Mammary epithelial cell (primary cell): ENCODE measurements at regions of chr10 and their contacts with region 1.

Region 1: GRCh38 chr10:102394079-102394800 is 1.3 kb upstream of the NFKB2 start:
- DNase-seq: peak; percentile 98
- H3K4me3 ChIP-seq: peak overlapping the region; percentile 74 to 77 (median 76)
- H3K27ac ChIP-seq: peak overlapping the region; percentile 89
- H3K4me1 ChIP-seq: peaks cover 18% of the 10 kb centered on the region
- H3K27me3 ChIP-seq: no peaks in the 10 kb centered on the region
- CTCF ChIP-seq: no peak

Region 2: DNA sequence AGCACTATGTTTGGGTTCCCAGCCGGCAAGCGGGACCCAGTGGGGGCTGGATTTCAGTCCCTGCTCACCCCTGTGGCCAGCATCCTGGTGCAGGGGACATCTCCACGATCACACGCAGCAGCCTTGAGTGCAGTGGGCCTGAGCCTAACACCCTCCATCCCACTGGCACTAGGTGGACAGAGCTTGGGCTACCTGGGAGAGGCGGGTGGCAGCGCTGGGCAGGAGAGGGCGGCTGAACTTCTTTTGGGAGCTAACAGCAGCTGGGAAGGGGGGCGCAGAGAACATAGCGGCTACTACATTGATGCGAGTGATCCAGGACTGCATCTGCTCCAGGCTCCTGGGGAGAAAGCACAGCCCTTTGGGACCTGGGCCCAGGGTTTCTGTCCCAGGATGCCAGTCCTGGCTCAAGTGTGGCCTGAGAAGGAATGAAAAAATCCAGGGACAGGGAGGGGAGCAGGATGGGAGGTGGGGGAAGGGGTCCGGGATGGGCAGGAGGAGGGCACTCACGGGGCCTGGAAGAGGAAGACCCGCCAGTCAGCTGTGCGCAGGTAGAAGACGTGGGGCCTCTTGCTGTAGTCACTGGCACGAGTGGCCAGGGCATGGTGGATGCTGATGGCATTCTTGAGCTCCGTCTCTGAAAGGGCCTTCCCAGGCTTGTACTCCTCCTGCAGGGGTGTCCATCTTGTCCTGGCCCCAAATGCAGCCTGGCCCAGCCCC is 10.3 kb after region 1 on chr10:
- CTCF ChIA-PET with region 1: interaction called, 8 read pairs
- dilution Hi-C with region 1: no loop called
- in situ Hi-C with region 1: no loop called
- intact Hi-C with region 1: loop called (anchors 1 kb)
- DNase-seq: no peak
- H3K4me3 ChIP-seq: no peak overlapping the region
- H3K27ac ChIP-seq: no peak overlapping the region
- H3K4me1 ChIP-seq: peaks cover 22% of the 10 kb centered on the region
- H3K27me3 ChIP-seq: peaks cover 12% of the 10 kb centered on the region
- CTCF ChIP-seq: no peak

Region 3: GRCh38 chr10:102461187-102462054 is 67.2 kb after region 1 on chr10:
- CTCF ChIA-PET with region 1: no interaction called
- dilution Hi-C with region 1: no loop called
- in situ Hi-C with region 1: no loop called
- intact Hi-C with region 1: no loop called
- DNase-seq: peak; percentile 88
- H3K4me3 ChIP-seq: peak overlapping the region; percentile 43 to 56 (median 54)
- H3K27ac ChIP-seq: peak overlapping the region; percentile 9
- H3K4me1 ChIP-seq: peaks cover 11% of the 10 kb centered on the region
- H3K27me3 ChIP-seq: no peaks in the 10 kb centered on the region
- CTCF ChIP-seq: no peak

Region 4: DNA sequence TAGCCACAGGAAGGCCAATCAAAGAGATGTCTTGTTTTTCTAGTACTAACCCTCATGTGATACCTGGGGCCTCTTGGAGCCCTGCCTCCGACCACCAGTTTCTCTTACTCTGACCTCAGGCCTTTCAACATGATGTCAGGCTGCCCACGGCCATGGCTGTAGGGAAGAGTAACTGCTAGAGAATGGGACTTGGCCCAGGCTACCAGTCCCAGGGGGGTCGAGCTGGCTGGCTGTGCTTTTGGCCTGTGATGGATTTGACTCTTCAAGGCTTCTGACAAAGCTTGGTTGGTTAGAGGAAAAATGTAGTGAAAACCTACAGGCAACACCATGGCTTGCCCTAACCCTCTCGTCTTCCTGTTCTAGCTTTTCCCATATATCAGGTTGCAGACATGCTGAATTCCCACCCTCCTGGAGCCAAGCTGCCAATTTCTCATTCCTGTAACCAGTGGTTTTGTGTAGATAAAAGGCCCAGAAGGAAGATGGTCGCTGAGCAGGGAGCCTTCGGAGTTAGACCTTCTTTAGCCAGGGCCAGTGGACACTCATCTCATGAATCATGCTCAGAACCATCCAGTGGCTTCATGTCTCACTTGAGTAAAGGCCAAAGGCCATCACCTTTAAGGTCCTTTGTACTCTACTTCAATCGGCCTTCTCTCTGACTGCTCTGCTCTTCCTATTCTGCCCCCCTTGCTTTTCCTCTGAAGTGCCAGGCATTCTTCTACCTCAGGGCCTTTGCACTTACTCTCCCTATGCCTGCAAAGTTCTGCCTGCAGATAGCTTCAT is 129.2 kb after region 1 on chr10:
- CTCF ChIA-PET with region 1: no interaction called
- dilution Hi-C with region 1: no loop called
- in situ Hi-C with region 1: no loop called
- intact Hi-C with region 1: no loop called
- DNase-seq: no peak
- H3K4me3 ChIP-seq: no peak overlapping the region
- H3K27ac ChIP-seq: no peak overlapping the region
- H3K4me1 ChIP-seq: no peaks in the 10 kb centered on the region
- H3K27me3 ChIP-seq: no peaks in the 10 kb centered on the region
- CTCF ChIP-seq: no peak

Region 5: GRCh38 chr10:102583435-102584417 is 189.5 kb after region 1 on chr10:
- CTCF ChIA-PET with region 1: interaction called, 4 read pairs
- dilution Hi-C with region 1: no loop called
- in situ Hi-C with region 1: no loop called
- intact Hi-C with region 1: loop called (anchors 1 kb)
- DNase-seq: peak; percentile 66
- H3K4me3 ChIP-seq: no peak overlapping the region
- H3K27ac ChIP-seq: no peak overlapping the region
- H3K4me1 ChIP-seq: no peaks in the 10 kb centered on the region
- H3K27me3 ChIP-seq: no peaks in the 10 kb centered on the region
- CTCF ChIP-seq: peak; percentile 89 to 91

Region 6: GRCh38 chr10:102713814-102714620 is 319.8 kb after region 1 on chr10 and contains the start of gene ARL3:
- CTCF ChIA-PET with region 1: no interaction called
- dilution Hi-C with region 1: no loop called
- in situ Hi-C with region 1: no loop called
- intact Hi-C with region 1: loop called (anchors 2 kb)
- DNase-seq: peak; percentile 99
- H3K4me3 ChIP-seq: peak within 1 kb of the TSS; percentile 84 to 95 (median 89)
- H3K27ac ChIP-seq: peak within 1 kb of the TSS; percentile 82
- H3K4me1 ChIP-seq: peaks cover 15% of the 10 kb centered on the region
- H3K27me3 ChIP-seq: no peaks in the 10 kb centered on the region
- CTCF ChIP-seq: peak; percentile 48 to 57
- total RNA-seq, gene ARL3: 2.3 to 8.7 TPM